HEK293T (cell line): ENCODE measurements at regions of chr2 and their contacts with region 1.

Region 1: GRCh38 chr2:98280376-98281102 is 65.7 kb upstream of the CNGA3 start:
- DNase-seq: no peak

Region 2: GRCh38 chr2:98269274-98269673 is 11.3 kb before region 1 on chr2:
- CTCF ChIA-PET with region 1: interaction called, 10 read pairs
- POLR2A ChIA-PET with region 1: no interaction called
- DNase-seq: peak; percentile 62

Region 3: GRCh38 chr2:98404556-98405220 is 124.1 kb after region 1 on chr2:
- CTCF ChIA-PET with region 1: no interaction called
- POLR2A ChIA-PET with region 1: no interaction called
- DNase-seq: no peak